Activated CD4-positive, alpha-beta memory T cell treated with anti-CD3 and anti-CD28 coated beads for 36 hours (primary cell): ENCODE measurements at regions of chr4 and their contacts with region 1.

Region 1: DNA sequence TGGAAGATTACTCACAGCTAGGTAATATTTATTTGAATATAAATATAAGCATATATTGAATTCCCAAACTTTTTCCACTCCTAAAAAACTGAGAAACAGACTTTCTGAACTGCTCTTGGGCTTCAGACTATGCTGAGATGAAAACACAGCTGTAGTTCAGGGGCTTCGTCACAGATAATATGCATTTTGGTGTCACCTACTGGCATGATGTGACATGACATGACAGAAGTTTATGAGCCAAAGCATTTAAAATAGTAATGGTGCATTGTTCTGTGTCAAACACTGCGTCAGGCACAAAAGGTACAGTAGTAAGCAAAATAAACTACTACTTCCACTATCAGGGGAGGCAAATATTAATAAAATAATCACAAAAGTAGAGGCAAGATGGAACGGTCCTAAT is 171.3 kb downstream of the BTC start:
- DNase-seq: no peak
- H3K4me3 Mint-ChIP-seq: no peak overlapping the region
- H3K27ac Mint-ChIP-seq: no peak overlapping the region
- H3K4me1 Mint-ChIP-seq: peaks cover 17% of the 10 kb centered on the region
- H3K27me3 Mint-ChIP-seq: no peaks in the 10 kb centered on the region

Region 2: DNA sequence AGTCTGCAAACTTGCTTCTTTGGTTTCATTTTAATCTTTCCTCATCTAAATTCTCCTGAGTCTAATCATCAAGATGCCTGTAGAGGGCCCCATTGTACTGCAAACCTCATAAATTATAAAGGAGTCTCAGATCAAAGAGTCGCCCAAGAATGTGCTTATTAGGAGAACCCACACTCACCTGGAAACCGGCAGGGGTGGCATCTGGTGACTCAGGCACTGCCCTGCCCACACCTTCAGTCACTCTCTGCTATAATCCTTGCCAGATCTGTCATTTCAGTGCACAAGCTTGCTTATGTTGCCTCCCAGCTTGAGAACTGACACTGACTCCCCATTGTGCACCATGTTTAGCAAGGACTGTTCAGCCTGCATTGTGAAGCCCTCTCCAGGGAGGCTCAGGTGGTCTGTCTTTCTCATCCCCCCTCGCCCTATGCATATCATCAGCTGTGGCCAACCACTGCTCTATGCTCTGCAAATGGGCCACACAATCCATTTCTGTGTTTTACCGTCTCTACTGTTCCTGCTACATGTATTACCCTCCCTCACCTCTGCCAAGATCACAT is 302.4 kb before region 1 on chr4:
- CTCF ChIA-PET with region 1: interaction called, 3 read pairs
- POLR2A ChIA-PET with region 1: no interaction called
- intact Hi-C with region 1: loop called (anchors 1 kb)
- DNase-seq: peak; percentile 48
- H3K4me3 Mint-ChIP-seq: no peak overlapping the region
- H3K27ac Mint-ChIP-seq: no peak overlapping the region
- H3K4me1 Mint-ChIP-seq: no peaks in the 10 kb centered on the region
- H3K27me3 Mint-ChIP-seq: peaks cover 14% of the 10 kb centered on the region

Region 3: GRCh38 chr4:74376888-74377483 is 246.1 kb before region 1 on chr4:
- CTCF ChIA-PET with region 1: interaction called, 3 read pairs
- POLR2A ChIA-PET with region 1: no interaction called
- intact Hi-C with region 1: loop called (anchors 1 kb)
- DNase-seq: no peak
- H3K4me3 Mint-ChIP-seq: no peak overlapping the region
- H3K27ac Mint-ChIP-seq: no peak overlapping the region
- H3K4me1 Mint-ChIP-seq: peaks cover 3% of the 10 kb centered on the region
- H3K27me3 Mint-ChIP-seq: peaks cover 5% of the 10 kb centered on the region

Region 4: DNA sequence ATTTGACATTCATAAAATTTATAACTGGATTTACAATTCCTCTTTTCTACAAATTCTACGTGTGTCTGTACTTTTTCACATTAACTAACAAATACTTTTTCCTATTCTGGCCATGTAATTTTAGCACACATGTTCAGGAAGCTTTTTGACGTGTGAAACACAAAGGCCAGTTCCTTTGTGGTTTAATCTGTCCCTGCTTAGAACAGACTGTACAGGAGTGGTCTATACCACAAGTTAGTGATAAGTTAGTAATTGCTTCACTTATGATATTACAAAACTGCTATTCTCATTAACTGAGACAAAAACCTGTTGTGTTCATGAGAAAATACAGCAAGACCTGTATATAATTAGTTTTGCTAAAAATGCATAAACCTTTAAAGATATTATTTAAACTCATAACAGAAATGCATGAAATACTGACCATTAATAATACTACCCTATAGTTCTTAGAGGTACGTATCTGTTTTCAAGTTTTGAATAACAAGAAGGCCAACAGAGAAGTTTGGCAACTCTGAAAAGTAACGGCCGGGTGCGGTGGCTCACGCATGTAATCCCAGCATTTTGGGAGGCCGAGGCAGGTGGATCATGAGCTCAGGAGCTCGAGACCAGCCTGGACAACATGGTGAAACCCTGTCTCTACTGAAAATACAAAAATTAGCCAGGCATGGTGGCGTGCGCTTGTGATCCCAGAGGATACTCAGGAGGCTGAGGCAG is 191.8 kb before region 1 on chr4:
- CTCF ChIA-PET with region 1: no interaction called
- POLR2A ChIA-PET with region 1: no interaction called
- intact Hi-C with region 1: no loop called
- DNase-seq: no peak
- H3K4me3 Mint-ChIP-seq: no peak overlapping the region
- H3K27ac Mint-ChIP-seq: no peak overlapping the region
- H3K4me1 Mint-ChIP-seq: no peaks in the 10 kb centered on the region
- H3K27me3 Mint-ChIP-seq: peaks cover 2% of the 10 kb centered on the region

Region 5: DNA sequence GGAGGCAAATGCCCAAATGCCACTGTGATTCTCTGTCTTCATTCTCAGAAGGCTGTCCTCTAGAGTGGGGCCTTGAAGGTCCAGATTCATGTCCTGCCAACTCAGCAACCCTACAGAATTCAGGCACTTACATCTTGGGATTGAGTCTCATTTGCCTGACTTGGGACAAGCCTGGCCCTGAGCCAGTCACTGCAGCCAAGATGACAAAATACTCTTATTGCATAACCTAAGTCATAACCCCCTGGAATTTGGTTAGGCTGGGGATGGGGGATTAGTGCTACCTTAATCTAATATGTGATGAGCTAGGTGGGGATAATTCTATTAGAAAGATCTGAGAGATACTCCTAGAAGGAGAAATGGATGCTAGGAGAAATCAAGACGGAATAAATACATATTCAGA is 77.6 kb before region 1 on chr4:
- CTCF ChIA-PET with region 1: no interaction called
- POLR2A ChIA-PET with region 1: no interaction called
- intact Hi-C with region 1: no loop called
- DNase-seq: no peak
- H3K4me3 Mint-ChIP-seq: no peak overlapping the region
- H3K27ac Mint-ChIP-seq: no peak overlapping the region
- H3K4me1 Mint-ChIP-seq: peaks cover 9% of the 10 kb centered on the region
- H3K27me3 Mint-ChIP-seq: peaks cover 1% of the 10 kb centered on the region